ENCODE measurements at regions of chr1 and their contacts with region 1.

Region 1: DNA sequence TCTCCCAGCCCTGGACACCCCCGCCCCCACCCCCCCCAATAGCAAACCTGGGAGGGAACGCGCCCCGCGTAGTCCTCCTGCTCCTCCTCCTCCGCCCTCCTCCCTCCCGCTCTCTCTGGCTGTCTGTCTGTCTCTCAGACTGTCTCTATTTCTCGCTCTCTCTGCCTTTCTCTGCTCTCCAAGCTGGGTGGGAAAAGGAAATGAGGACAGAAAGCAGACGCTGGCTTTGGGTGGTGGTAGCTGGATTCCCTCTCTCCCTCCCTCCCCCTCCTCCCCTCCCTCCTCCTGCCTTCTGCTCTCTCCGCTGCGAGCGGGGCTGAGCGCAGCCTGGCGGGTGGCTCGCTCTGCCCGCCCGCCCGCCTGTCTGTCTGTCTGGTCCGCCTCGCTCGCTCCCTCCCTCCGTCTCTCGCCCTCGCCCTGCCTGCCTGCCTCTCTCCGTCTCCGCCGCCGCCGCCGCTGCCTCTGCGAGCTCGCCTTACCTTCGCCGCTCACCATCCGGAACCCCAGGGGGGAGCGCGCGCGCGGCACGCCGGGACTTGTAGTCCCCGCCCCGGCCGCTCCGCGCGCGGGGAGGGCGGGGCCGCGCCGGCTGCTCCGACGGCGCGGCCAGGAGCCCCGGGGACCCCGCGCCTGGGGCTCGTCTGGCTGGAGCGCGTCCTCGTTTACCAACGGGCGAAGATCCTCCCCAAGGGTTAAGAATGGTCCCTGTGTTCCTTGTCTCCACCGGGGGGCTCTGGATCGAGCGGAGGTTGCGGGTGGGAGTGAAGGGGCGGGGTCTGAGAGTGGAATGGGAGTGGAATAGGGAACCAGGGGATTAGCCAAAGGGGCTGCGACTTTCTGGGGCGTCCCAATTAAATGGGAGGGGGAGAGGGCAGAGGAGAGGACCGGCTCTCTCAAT is at the start of gene AHDC1:
- DNase-seq: peak; percentile 97
- H3K4me3 ChIP-seq: peak within 1 kb of the TSS; percentile 67 to 99 (median 96)
- H3K27ac ChIP-seq: peak within 1 kb of the TSS; percentile 92 to 100 (median 97)
- H3K4me1 ChIP-seq: peaks cover 0 to 54% (median 44%) of the 10 kb centered on the region in 4 donors
- H3K27me3 ChIP-seq: no peaks in the 10 kb centered on the region
- CTCF ChIP-seq: no peak
- EP300 ChIP-seq: no peak
- POLR2A ChIP-seq: peak; percentile 76 to 87
- total RNA-seq, gene AHDC1: 10.9 to 34.1 (median 14.3) TPM

Region 2: GRCh38 chr1:27300341-27301051 is 303.4 kb before region 1 on chr1:
- intact Hi-C with region 1: loop called (anchors 5 kb)
- DNase-seq: peak; percentile 95
- H3K4me3 ChIP-seq: no peak overlapping the region
- H3K27ac ChIP-seq: peak overlapping the region; percentile 84 to 96 (median 92)
- H3K4me1 ChIP-seq: peaks cover 2 to 47% (median 46%) of the 10 kb centered on the region in 4 donors
- H3K27me3 ChIP-seq: no peaks in the 10 kb centered on the region
- CTCF ChIP-seq: peak; percentile 99
- EP300 ChIP-seq: no peak
- POLR2A ChIP-seq: no peak

Region 3: GRCh38 chr1:27392096-27392777 is 211.7 kb before region 1 on chr1 and contains the start of gene GPR3:
- intact Hi-C with region 1: loop called (anchors 2 kb)
- DNase-seq: peak; percentile 96
- H3K4me3 ChIP-seq: peak within 1 kb of the TSS; percentile 18 to 53 (median 46)
- H3K27ac ChIP-seq: peak within 1 kb of the TSS; percentile 38 to 78 (median 58)
- H3K4me1 ChIP-seq: peaks cover 0 to 28% (median 20%) of the 10 kb centered on the region in 4 donors
- H3K27me3 ChIP-seq: no peaks in the 10 kb centered on the region
- CTCF ChIP-seq: peak; percentile 30 to 53 (median 44)
- EP300 ChIP-seq: no peak
- POLR2A ChIP-seq: no peak
- total RNA-seq, gene GPR3: 0.36 to 2.0 TPM in 2 of 4 donors, not detected in the others

Region 4: DNA sequence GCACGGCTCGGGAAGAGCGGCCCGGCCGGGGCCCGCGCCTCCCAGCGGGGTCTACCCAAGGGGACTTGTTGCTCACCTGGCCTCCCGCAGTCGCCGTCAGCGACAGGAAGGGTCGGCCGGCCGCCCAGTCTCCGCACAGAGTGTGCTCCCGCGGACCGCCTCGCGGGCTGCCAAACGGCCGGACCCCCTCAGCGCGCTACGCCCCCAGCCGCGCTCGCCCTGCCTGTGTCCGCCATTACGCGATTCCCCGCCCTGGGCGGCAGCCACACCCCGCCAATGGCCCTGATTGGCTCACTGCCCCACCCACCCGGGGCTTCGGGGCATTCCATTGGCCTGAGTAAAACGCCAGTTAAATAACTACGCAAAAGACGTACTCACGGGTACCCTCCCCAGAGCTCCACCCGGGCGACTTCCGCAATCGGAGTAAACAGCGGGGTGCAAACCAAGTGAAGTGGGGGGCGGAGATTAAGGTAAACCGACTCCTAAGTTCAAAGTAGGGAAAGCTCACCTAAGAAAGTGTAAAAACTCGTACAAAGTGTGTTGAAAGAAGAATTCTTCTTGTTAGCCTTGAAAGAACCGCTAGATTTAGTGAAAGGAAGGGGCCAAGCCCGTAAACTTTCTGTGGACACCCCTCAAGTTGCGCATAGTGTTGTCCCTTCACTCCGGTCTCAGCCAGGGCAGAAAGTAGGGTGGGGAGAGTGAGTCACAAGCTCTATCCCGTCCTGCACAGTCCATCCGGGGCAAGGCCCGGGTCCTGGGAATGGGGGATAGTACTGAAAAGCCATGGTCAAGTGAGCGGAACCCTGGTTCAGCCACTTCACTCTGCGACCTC is 113.8 kb before region 1 on chr1 and contains the start of gene WASF2:
- intact Hi-C with region 1: loop called (anchors 1 kb)
- DNase-seq: peak; percentile 99
- H3K4me3 ChIP-seq: peak within 1 kb of the TSS; percentile 78 to 98 (median 90)
- H3K27ac ChIP-seq: peak within 1 kb of the TSS; percentile 94 to 99 (median 98)
- H3K4me1 ChIP-seq: peaks cover 0 to 57% (median 35%) of the 10 kb centered on the region in 4 donors
- H3K27me3 ChIP-seq: no peaks in the 10 kb centered on the region
- CTCF ChIP-seq: no peak
- EP300 ChIP-seq: peak in 1 of 4 donors; percentile 37
- POLR2A ChIP-seq: peak; percentile 85 to 95
- total RNA-seq, gene WASF2: 43.9 to 63.2 (median 59.9) TPM

Region 5: DNA sequence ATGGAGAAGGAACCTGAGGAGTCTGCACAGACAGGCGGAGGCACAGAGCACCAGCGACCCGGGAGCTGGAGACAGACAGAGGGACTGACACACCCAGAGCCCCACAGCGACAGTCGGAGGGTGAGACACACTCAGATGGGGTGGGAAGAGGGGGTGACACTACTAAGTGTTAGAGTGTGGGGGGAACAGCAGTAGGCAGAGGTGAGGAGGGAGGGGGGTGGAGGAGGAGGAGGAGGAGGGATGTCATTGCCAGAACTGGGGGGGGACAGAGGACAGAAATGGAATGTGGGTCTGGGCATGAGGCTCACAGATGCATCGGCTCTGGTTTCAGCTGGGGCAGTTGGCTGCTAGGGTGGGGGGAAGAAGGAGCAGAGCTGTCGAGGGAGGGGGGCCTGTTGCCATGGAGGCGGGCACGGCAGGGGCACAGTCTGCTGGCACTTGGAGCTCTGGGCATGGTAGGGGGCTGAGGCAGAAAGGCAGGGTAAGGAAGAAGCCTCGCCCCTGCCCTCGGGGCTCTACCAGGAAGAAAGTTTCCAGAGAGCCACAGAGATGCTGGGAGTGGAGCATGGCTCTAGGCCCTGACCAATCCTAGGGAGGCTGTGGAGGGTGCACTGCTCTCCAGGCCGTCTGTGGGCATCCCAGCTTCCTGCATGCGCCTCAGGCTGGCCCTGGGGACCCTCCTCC is 37.3 kb before region 1 on chr1:
- intact Hi-C with region 1: loop called (anchors 2 kb)
- DNase-seq: peak; percentile 71
- H3K4me3 ChIP-seq: no peak overlapping the region
- H3K27ac ChIP-seq: peak overlapping the region; percentile 96 to 98 (median 97)
- H3K4me1 ChIP-seq: peaks cover 0 to 100% (median 98%) of the 10 kb centered on the region in 4 donors
- H3K27me3 ChIP-seq: no peaks in the 10 kb centered on the region
- CTCF ChIP-seq: no peak
- EP300 ChIP-seq: no peak
- POLR2A ChIP-seq: no peak

Region 6: GRCh38 chr1:28259307-28260167 is 655.6 kb after region 1 on chr1 and contains the start of gene SESN2:
- intact Hi-C with region 1: no loop called
- DNase-seq: peak; percentile 100
- H3K4me3 ChIP-seq: peak within 1 kb of the TSS; percentile 77 to 87 (median 80)
- H3K27ac ChIP-seq: peak within 1 kb of the TSS; percentile 85 to 98 (median 95)
- H3K4me1 ChIP-seq: peaks cover 0 to 29% (median 18%) of the 10 kb centered on the region in 4 donors
- H3K27me3 ChIP-seq: no peaks in the 10 kb centered on the region
- CTCF ChIP-seq: no peak
- EP300 ChIP-seq: no peak
- POLR2A ChIP-seq: peak; percentile 97 to 98
- total RNA-seq, gene SESN2: 4.9 to 6.3 (median 5.9) TPM

Measured in sigmoid colon (tissue), 7 donors.